ENCODE measurements at regions of chr15 and their contacts with region 1.

Region 1: DNA sequence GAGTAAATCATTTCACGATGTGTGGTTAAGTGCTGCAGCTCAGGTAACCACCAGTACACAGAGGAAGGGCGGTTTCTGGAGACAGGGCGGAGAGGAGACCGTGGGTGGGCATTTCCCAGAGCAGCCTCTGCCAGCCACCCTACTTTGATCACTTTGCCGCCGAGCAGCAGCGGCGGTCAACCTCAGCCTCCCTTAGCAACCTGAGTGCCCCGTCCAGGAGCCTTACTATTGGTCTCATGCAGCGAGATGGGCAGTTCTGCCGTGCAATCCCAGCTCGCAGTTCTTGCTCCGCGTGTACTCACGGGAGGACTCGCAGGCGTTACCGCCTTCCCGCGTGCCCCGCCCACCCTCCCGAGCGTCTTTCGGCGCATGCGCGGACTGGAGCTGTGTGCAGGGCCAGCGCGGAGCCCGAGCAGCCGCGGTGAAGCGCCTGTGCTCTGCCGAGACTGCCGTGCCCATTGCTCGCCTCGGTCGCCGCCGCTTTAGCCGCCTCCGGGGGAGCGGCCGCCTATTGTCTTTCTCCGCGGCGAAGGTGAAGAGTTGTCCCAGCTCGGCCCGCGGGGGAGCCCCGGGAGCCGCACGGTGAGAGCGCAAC is at the start of gene AKAP13:
- DNase-seq: peak; percentile 97
- ATAC-seq: peak; percentile 90
- H3K4me3 Mint-ChIP-seq: peak within 1 kb of the TSS; percentile 72
- H3K27ac Mint-ChIP-seq: peak within 1 kb of the TSS; percentile 92
- H3K4me1 Mint-ChIP-seq: peaks cover 50% of the 10 kb centered on the region
- H3K27me3 Mint-ChIP-seq: no peaks in the 10 kb centered on the region
- total RNA-seq, gene AKAP13: 85.1 to 104 TPM

Region 2: DNA sequence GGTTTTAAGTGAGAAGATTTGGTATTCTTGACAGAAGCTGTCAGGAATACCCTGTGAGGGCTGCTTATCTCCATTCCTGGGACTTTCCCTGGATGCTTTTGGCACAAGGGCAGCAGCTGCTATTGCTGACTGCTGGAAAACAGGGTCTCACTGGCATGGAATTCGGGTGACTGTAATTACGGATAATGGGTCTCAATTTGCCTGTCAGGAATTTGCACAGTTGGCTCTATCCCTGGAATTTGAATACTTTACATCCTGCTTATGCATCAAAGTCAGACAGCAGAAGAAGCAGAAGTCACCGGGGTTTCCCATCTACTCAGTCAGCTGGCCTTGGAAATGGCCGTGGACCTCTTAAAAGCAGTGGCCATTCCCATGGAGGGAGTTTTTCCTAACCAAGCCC is 25.9 kb before region 1 on chr15:
- CTCF ChIA-PET with region 1: no interaction called
- POLR2A ChIA-PET with region 1: no interaction called
- intact Hi-C with region 1: loop called in 1 of 2 experiments (anchors 1 kb)
- DNase-seq: no peak
- ATAC-seq: no peak
- H3K4me3 Mint-ChIP-seq: no peak overlapping the region
- H3K27ac Mint-ChIP-seq: no peak overlapping the region
- H3K4me1 Mint-ChIP-seq: peaks cover 10% of the 10 kb centered on the region
- H3K27me3 Mint-ChIP-seq: peaks cover 3% of the 10 kb centered on the region

Region 3: GRCh38 chr15:85402195-85402881 is 22.0 kb after region 1 on chr15:
- CTCF ChIA-PET with region 1: interaction called, 15 read pairs
- POLR2A ChIA-PET with region 1: interaction called, 9 read pairs
- intact Hi-C with region 1: loop called (anchors 1 to 2 kb)
- DNase-seq: no peak
- ATAC-seq: peak; percentile 68
- H3K4me3 Mint-ChIP-seq: peak overlapping the region; percentile 2
- H3K27ac Mint-ChIP-seq: peak overlapping the region; percentile 33
- H3K4me1 Mint-ChIP-seq: peaks cover 78% of the 10 kb centered on the region
- H3K27me3 Mint-ChIP-seq: no peaks in the 10 kb centered on the region

Region 4: GRCh38 chr15:85443593-85444087 is 63.3 kb after region 1 on chr15:
- CTCF ChIA-PET with region 1: no interaction called
- POLR2A ChIA-PET with region 1: no interaction called
- intact Hi-C with region 1: loop called in 1 of 2 experiments (anchors 5 kb)
- DNase-seq: peak; percentile 49
- ATAC-seq: peak; percentile 81
- H3K4me3 Mint-ChIP-seq: peak overlapping the region; percentile 10
- H3K27ac Mint-ChIP-seq: peak overlapping the region; percentile 41
- H3K4me1 Mint-ChIP-seq: peaks cover 48% of the 10 kb centered on the region
- H3K27me3 Mint-ChIP-seq: no peaks in the 10 kb centered on the region